ENCODE measurements at regions of chr6 and their contacts with region 1.

Region 1: DNA sequence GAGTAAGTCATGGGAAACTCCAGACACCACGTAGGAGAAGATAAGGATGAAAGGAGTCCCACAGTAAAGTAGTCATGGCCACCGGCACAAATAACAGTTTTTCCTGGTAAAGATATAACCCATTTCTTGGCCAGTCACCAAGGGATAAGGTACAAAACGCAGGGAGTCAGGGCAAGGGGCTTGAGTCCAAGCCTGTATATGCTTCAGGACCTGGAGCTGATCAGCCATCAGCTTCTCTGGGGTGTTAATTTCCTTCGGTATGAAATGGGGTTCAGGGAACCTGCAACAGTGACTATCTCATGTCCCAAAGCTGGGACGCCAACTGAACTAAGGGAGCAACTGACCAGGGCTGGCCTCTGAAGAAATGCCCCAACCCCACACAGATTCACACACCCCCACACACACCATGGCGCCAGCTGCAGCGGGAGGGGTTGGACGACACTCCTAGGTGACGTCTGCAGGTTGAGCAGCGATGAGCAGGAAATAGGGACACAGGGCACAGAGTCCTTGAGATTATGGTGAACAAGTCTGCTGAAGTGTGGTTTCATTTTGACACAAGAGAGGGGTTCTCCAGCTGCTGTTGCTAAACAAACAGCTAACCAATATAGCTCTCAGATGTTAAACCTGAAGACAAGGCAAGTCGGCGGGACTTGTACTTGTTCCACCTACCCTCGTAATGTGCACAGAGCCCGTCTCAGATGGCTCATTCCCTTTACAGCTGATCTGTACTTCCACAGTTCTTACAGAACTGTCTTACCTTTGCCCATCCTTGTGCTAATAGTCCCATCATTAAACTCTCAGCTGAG is 7.4 kb upstream of the ADTRP start:
- DNase-seq: peak; percentile 82
- H3K4me3 Mint-ChIP-seq: peak overlapping the region; percentile 46
- H3K27ac Mint-ChIP-seq: peak overlapping the region; percentile 72
- H3K4me1 Mint-ChIP-seq: peaks cover 7% of the 10 kb centered on the region
- H3K27me3 Mint-ChIP-seq: no peaks in the 10 kb centered on the region

Region 2: GRCh38 chr6:11556309-11556708 is 229.7 kb before region 1 on chr6:
- intact Hi-C with region 1: no loop called
- DNase-seq: no peak
- H3K4me3 Mint-ChIP-seq: no peak overlapping the region
- H3K27ac Mint-ChIP-seq: no peak overlapping the region
- H3K4me1 Mint-ChIP-seq: peaks cover 3% of the 10 kb centered on the region
- H3K27me3 Mint-ChIP-seq: peaks cover 12% of the 10 kb centered on the region

Region 3: DNA sequence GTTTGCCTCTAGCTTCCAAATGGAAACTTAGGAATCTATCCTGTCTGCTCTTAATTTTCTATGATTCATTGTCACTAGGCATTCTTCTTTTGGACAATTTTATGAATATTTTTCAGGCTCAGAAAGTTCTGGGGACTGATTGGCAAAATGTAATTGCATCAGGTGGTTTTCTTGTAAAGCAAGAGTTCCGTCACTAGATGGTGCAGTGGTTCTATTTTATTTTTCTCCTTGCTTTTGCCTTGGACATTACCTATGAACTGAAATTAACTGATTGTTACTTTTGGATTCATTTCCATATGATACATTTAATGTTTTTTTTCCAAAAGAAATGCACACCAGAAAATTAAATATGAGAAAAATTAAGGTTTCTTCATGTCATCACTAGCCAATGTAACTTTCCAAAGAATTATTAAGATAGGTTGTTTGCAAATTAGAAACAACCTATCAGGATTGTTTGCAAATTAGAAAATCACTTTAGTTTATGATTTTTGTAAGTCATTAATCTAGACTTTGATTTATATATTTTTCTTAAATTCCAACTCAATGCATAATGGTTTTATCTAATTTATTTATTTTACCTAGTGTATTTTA is 200.5 kb before region 1 on chr6:
- intact Hi-C with region 1: no loop called
- DNase-seq: peak; percentile 66
- H3K4me3 Mint-ChIP-seq: no peak overlapping the region
- H3K27ac Mint-ChIP-seq: no peak overlapping the region
- H3K4me1 Mint-ChIP-seq: no peaks in the 10 kb centered on the region
- H3K27me3 Mint-ChIP-seq: peaks cover 13% of the 10 kb centered on the region

Region 4: GRCh38 chr6:11824986-11825385 is 39.0 kb after region 1 on chr6:
- intact Hi-C with region 1: loop called (anchors 5 kb)
- DNase-seq: peak; percentile 62
- H3K4me3 Mint-ChIP-seq: no peak overlapping the region
- H3K27ac Mint-ChIP-seq: peak overlapping the region; percentile 80
- H3K4me1 Mint-ChIP-seq: peaks cover 8% of the 10 kb centered on the region
- H3K27me3 Mint-ChIP-seq: no peaks in the 10 kb centered on the region